Activated CD4-positive, alpha-beta T cell treated with anti-CD3 and anti-CD28 coated beads for 36 hours (primary cell): ENCODE measurements at regions of chrX and their contacts with region 1.

Region 1: DNA sequence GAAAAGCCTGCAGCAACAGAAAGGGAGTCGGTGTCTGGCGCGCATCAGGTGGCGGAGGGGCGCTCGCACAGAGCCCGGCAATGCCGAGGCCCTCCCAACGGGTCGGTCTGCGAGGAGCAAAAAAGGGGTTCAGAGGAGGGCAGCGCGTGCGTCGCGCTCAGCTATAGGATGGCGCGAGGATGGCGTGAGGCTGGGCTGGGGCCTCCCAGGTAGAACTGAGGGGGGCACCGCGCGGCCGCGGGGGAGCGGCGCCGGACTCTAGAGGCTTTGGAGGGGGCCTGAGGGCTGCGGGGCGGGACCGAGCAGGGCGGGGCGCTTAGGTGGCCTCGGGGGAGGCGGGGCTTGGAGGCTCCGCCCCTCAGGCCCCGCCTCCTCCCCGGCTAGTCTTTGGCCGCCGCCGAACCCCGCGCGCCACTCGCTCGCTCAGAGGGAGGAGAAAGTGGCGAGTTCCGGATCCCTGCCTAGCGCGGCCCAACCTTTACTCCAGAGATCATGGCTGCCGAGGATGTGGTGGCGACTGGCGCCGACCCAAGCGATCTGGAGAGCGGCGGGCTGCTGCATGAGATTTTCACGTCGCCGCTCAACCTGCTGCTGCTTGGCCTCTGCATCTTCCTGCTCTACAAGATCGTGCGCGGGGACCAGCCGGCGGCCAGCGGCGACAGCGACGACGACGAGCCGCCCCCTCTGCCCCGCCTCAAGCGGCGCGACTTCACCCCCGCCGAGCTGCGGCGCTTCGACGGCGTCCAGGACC is at the start of gene PGRMC1:
- DNase-seq: peak; percentile 86
- ATAC-seq: peak; percentile 94
- H3K4me3 Mint-ChIP-seq: peak within 1 kb of the TSS; percentile 89
- H3K27ac Mint-ChIP-seq: peak within 1 kb of the TSS; percentile 86
- H3K4me1 Mint-ChIP-seq: peaks cover 27% of the 10 kb centered on the region
- H3K27me3 Mint-ChIP-seq: peaks cover 3% of the 10 kb centered on the region
- total RNA-seq, gene PGRMC1: 30.8 to 37.3 TPM

Region 2: GRCh38 chrX:118637997-118638396 is 598.0 kb before region 1 on chrX:
- CTCF ChIA-PET with region 1: no interaction called
- POLR2A ChIA-PET with region 1: no interaction called
- intact Hi-C with region 1: no loop called
- DNase-seq: no peak
- ATAC-seq: no peak
- H3K4me3 Mint-ChIP-seq: no peak overlapping the region
- H3K27ac Mint-ChIP-seq: no peak overlapping the region
- H3K4me1 Mint-ChIP-seq: peaks cover 3% of the 10 kb centered on the region
- H3K27me3 Mint-ChIP-seq: no peaks in the 10 kb centered on the region

Region 3: GRCh38 chrX:118974088-118974907 is 261.7 kb before region 1 on chrX and contains the start of gene LONRF3:
- CTCF ChIA-PET with region 1: no interaction called
- POLR2A ChIA-PET with region 1: no interaction called
- intact Hi-C with region 1: loop called in 1 of 2 experiments (anchors 10 kb)
- DNase-seq: peak; percentile 70
- ATAC-seq: peak; percentile 47
- H3K4me3 Mint-ChIP-seq: peak within 1 kb of the TSS; percentile 85
- H3K27ac Mint-ChIP-seq: peak within 1 kb of the TSS; percentile 93
- H3K4me1 Mint-ChIP-seq: peaks cover 8% of the 10 kb centered on the region
- H3K27me3 Mint-ChIP-seq: peaks cover 12% of the 10 kb centered on the region
- total RNA-seq, gene LONRF3: 1.7 to 1.9 TPM